AG04449 (cell line): ENCODE measurements at regions of chr6 and their contacts with region 1.

Region 1: DNA sequence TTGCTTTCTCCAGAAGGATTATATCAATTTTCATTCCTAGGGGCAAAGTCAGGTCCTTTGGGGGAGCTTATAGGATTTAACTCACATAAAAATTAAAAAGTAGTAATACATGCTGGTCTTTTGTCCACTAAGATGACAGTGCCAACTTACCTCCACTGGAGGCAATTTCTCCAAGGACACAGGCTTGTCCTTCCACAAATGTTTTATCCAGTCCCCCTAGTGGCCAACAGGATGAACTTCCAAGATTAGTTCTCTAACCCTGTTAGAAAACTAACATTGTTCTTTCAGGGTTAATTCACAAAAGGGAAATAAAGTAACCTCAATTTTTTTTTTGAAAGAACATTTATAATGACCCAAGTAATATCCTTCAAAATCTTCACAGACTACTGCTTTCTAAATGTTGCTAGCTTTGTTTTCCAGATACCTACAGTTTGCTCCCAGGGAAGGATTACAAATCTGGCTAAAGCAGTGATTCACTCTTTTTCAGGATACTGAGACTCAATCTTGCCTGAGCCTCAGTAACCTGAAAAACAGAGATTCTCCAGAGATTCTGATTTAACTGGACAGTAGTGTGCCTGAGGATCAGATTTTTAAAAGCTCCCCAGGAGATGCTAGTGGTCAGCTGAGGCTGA is 31.7 kb upstream of the UBR2 start:
- DNase-seq: no peak
- H3K4me3 ChIP-seq: no peak overlapping the region
- CTCF ChIP-seq: peak; percentile 70

Region 2: GRCh38 chr6:42059743-42060142 is 472.4 kb before region 1 on chr6:
- CTCF ChIA-PET with region 1: no interaction called
- POLR2A ChIA-PET with region 1: no interaction called
- DNase-seq: no peak
- H3K4me3 ChIP-seq: no peak overlapping the region
- CTCF ChIP-seq: no peak

Region 3: GRCh38 chr6:42230345-42231321 is 301.5 kb before region 1 on chr6:
- CTCF ChIA-PET with region 1: interaction called, 12 read pairs
- POLR2A ChIA-PET with region 1: no interaction called
- DNase-seq: no peak
- H3K4me3 ChIP-seq: no peak overlapping the region
- CTCF ChIP-seq: peak; percentile 27

Region 4: DNA sequence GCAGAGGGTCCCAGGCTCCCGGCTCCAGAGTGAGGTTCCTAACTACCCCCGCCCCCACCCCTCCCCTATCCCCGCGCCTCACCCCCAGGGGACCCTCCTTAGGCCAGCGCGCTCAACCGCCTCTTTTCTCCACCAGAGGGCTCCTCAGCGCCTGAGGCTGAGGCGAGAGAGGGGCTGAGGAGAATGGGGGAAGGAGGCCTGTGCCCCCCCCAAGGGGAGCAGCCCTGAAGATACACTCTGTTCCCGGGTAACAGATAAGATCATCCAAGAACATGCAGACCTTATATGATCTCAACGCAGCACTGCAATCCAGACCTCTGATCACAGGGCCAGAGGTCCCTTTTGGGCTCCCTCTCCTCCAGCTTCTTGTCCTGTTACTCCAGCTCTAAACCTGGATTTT is 271.2 kb before region 1 on chr6:
- CTCF ChIA-PET with region 1: interaction called, 35 read pairs
- POLR2A ChIA-PET with region 1: no interaction called
- DNase-seq: no peak
- H3K4me3 ChIP-seq: no peak overlapping the region
- CTCF ChIP-seq: peak; percentile 74

Region 5: GRCh38 chr6:42338663-42339218 is 193.4 kb before region 1 on chr6:
- CTCF ChIA-PET with region 1: interaction called, 13 read pairs
- POLR2A ChIA-PET with region 1: no interaction called
- DNase-seq: peak; percentile 98
- H3K4me3 ChIP-seq: peak overlapping the region; percentile 23
- CTCF ChIP-seq: no peak

Region 6: DNA sequence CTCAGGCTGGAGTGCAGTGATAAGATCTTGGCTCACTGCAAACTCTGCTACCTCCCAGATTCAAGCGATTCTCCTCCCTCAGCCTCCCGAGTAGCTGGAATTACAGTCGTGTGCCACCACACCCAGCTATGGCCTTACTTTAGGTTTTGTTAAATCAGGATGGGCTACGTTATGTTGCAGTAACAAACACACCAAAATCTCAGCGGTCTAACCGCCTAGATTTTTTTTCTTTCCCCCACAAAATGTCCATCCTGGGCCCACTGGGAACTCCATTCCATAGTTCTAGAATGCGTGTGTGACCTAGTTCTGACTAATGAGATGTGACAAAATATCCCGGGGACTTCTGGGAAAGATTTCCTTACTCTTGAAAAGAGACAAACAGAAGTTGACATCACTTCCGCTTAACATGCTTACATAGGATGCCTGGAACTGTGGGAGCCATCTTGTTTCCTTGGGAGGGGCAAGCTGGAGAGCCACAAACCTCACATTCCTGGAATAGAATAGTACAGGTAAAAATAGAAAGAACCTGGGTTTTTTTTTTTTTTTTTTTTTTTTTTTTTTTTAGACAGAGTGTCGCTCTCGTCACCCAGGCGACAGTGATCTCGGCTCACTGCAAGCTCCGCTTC is 38.1 kb before region 1 on chr6:
- CTCF ChIA-PET with region 1: interaction called, 10 read pairs
- POLR2A ChIA-PET with region 1: no interaction called
- DNase-seq: no peak
- H3K4me3 ChIP-seq: no peak overlapping the region
- CTCF ChIP-seq: no peak

Region 7: GRCh38 chr6:42511803-42512422 is 20.2 kb before region 1 on chr6:
- CTCF ChIA-PET with region 1: interaction called, 33 read pairs
- POLR2A ChIA-PET with region 1: no interaction called
- DNase-seq: no peak
- H3K4me3 ChIP-seq: no peak overlapping the region
- CTCF ChIP-seq: no peak

Region 8: GRCh38 chr6:42805297-42805861 is 273.2 kb after region 1 on chr6:
- CTCF ChIA-PET with region 1: no interaction called
- POLR2A ChIA-PET with region 1: no interaction called
- DNase-seq: no peak
- H3K4me3 ChIP-seq: no peak overlapping the region
- CTCF ChIP-seq: no peak